Caco-2 (cell line): ENCODE measurements at regions of chr1 and their contacts with region 1.

Region 1: GRCh38 chr1:199463521-199464128 is 563.9 kb upstream of the NR5A2 start:
- DNase-seq: peak; percentile 62 to 67
- H3K4me3 ChIP-seq: no peak overlapping the region
- H3K4me3 Mint-ChIP-seq: no peak overlapping the region
- H3K27ac Mint-ChIP-seq: no peak overlapping the region
- H3K4me1 ChIP-seq: no peaks in the 10 kb centered on the region
- H3K4me1 Mint-ChIP-seq: no peaks in the 10 kb centered on the region
- H3K27me3 ChIP-seq: no peaks in the 10 kb centered on the region
- H3K27me3 Mint-ChIP-seq: no peaks in the 10 kb centered on the region
- CTCF ChIP-seq: peak; percentile 53 to 64

Region 2: DNA sequence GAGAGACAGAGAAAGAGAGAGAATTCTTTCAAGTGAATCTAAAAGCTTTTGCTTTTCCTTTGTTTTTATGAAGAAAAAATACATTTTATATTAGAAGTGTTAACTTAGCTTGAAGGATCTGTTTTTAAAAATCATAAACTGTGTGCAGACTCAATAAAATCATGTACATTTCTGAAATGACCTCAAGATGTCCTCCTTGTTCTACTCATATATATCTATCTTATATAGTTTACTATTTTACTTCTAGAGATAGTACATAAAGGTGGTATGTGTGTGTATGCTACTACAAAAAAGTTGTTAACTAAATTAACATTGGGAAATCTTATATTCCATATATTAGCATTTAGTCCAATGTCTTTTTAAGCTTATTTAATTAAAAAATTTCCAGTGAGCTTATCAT is 707.2 kb before region 1 on chr1:
- CTCF ChIA-PET with region 1: interaction called, 5 read pairs
- POLR2A ChIA-PET with region 1: no interaction called
- intact Hi-C with region 1: loop called (anchors 1 kb)
- DNase-seq: no peak
- H3K4me3 ChIP-seq: no peak overlapping the region
- H3K4me3 Mint-ChIP-seq: no peak overlapping the region
- H3K27ac Mint-ChIP-seq: no peak overlapping the region
- H3K4me1 ChIP-seq: no peaks in the 10 kb centered on the region
- H3K4me1 Mint-ChIP-seq: peaks cover 5% of the 10 kb centered on the region
- H3K27me3 ChIP-seq: no peaks in the 10 kb centered on the region
- H3K27me3 Mint-ChIP-seq: peaks cover 8% of the 10 kb centered on the region
- CTCF ChIP-seq: no peak

Region 3: GRCh38 chr1:199113265-199113869 is 350.3 kb before region 1 on chr1:
- CTCF ChIA-PET with region 1: no interaction called
- POLR2A ChIA-PET with region 1: no interaction called
- intact Hi-C with region 1: loop called (anchors 1 kb)
- DNase-seq: peak; percentile 50 to 59
- H3K4me3 ChIP-seq: no peak overlapping the region
- H3K4me3 Mint-ChIP-seq: no peak overlapping the region
- H3K27ac Mint-ChIP-seq: no peak overlapping the region
- H3K4me1 ChIP-seq: no peaks in the 10 kb centered on the region
- H3K4me1 Mint-ChIP-seq: no peaks in the 10 kb centered on the region
- H3K27me3 ChIP-seq: no peaks in the 10 kb centered on the region
- H3K27me3 Mint-ChIP-seq: peaks cover 3% of the 10 kb centered on the region
- CTCF ChIP-seq: peak; percentile 71 to 81

Region 4: DNA sequence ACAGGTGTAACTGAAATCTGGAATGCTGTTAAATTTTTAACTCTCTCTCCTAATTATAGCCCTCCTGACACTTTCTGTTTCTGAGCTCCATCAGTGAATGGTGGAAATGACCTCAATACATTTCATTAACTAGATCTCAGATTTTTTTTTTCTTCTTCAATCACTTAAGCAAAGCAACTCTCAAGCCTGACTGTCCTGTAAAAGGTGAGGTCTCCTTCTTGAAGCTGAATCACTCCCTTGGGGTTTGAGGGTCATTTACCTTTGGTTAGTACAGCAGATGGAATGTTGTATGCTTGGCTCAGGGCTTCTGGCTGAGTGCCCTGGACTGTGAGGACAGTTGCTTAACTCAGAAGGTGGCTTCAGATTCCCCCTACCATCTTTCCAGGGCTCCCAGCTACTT is 306.1 kb before region 1 on chr1:
- CTCF ChIA-PET with region 1: no interaction called
- POLR2A ChIA-PET with region 1: no interaction called
- intact Hi-C with region 1: loop called (anchors 10 kb)
- DNase-seq: no peak
- H3K4me3 ChIP-seq: no peak overlapping the region
- H3K4me3 Mint-ChIP-seq: no peak overlapping the region
- H3K27ac Mint-ChIP-seq: no peak overlapping the region
- H3K4me1 ChIP-seq: no peaks in the 10 kb centered on the region
- H3K4me1 Mint-ChIP-seq: no peaks in the 10 kb centered on the region
- H3K27me3 ChIP-seq: no peaks in the 10 kb centered on the region
- H3K27me3 Mint-ChIP-seq: peaks cover 5% of the 10 kb centered on the region
- CTCF ChIP-seq: no peak

Region 5: DNA sequence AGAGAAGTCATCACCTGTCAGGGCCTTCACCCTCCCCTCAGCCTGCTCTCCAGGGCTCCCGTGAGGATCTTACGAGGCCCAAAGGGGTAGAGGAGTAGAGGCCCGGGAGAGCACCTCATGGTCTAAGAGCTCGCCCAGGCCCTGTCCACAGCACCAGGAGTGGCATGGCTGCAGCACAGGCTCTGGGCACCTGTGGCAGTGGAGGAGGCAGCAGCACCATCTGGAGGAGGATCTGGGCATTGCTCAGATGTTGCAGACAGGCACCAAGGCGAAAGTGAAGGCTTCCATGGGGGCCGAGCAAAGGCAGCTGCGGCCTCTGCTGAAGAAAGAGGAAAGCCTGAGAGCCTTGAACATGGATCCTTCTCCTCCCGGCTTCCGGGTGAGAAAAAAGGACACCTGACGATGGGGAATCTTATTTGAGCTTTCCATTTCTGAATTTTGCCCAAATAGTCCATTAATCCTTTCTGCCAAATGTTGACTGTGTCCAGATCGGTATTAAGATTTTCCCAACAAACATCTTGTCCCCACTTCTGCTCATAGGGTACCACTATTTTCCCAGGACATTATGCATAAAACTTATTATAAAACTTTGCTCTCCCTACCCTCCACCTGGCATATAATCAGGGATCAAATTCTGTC is 220.1 kb before region 1 on chr1:
- CTCF ChIA-PET with region 1: no interaction called
- POLR2A ChIA-PET with region 1: no interaction called
- intact Hi-C with region 1: loop called (anchors 10 kb)
- DNase-seq: peak; percentile 45 to 46
- H3K4me3 ChIP-seq: no peak overlapping the region
- H3K4me3 Mint-ChIP-seq: no peak overlapping the region
- H3K27ac Mint-ChIP-seq: no peak overlapping the region
- H3K4me1 ChIP-seq: no peaks in the 10 kb centered on the region
- H3K4me1 Mint-ChIP-seq: peaks cover 8% of the 10 kb centered on the region
- H3K27me3 ChIP-seq: no peaks in the 10 kb centered on the region
- H3K27me3 Mint-ChIP-seq: peaks cover 4% of the 10 kb centered on the region
- CTCF ChIP-seq: peak; percentile 38 to 42